A549 (cell line): ENCODE measurements at regions of chr4 and their contacts with region 1.

Region 1: GRCh38 chr4:150224896-150225591 is 146.8 kb downstream of the DCLK2 start:
- DNase-seq: peak; percentile 25 to 88
- ATAC-seq: peak; percentile 97
- H3K4me3 ChIP-seq: no peak overlapping the region
- H3K27ac ChIP-seq: peak overlapping the region; percentile 70 to 84
- H3K4me1 ChIP-seq: peaks cover 67% of the 10 kb centered on the region
- CTCF ChIP-seq: no peak
- EP300 ChIP-seq: peak in 1 of 2 experiments; percentile 54; a peak in 1 of 5 replicates
- POLR2A ChIP-seq: no peak
- RAD21 ChIP-seq: no peak

Region 2: DNA sequence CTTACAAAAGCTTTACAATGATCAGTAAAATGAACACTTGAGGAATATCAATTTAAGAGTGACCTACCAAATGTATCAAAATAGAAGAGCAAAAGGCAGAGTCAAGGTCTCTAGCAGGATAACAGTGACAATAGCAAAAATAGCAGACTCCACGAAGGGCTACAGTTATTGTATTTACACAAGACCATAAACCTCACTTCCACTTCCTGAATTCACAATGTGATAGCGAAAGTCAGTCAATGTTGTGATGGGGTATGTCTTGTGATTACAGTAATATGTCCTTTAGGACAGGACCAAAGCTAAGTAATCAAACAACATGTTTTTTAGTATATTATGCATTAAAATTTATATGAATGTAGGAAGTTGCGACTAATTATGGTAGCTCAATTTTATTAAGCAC is 549.0 kb before region 1 on chr4:
- CTCF ChIA-PET with region 1: no interaction called
- POLR2A ChIA-PET with region 1: no interaction called
- DNase-seq: no peak
- ATAC-seq: no peak
- H3K4me3 ChIP-seq: no peak overlapping the region
- H3K27ac ChIP-seq: no peak overlapping the region
- H3K4me1 ChIP-seq: no peaks in the 10 kb centered on the region
- CTCF ChIP-seq: no peak
- EP300 ChIP-seq: no peak
- POLR2A ChIP-seq: no peak
- RAD21 ChIP-seq: no peak

Region 3: GRCh38 chr4:149987330-149988086 is 237.5 kb before region 1 on chr4:
- CTCF ChIA-PET with region 1: no interaction called
- POLR2A ChIA-PET with region 1: no interaction called
- DNase-seq: no peak
- ATAC-seq: no peak
- H3K4me3 ChIP-seq: no peak overlapping the region
- H3K27ac ChIP-seq: no peak overlapping the region
- H3K4me1 ChIP-seq: peaks cover 14% of the 10 kb centered on the region
- CTCF ChIP-seq: no peak
- EP300 ChIP-seq: no peak
- POLR2A ChIP-seq: no peak
- RAD21 ChIP-seq: no peak

Region 4: DNA sequence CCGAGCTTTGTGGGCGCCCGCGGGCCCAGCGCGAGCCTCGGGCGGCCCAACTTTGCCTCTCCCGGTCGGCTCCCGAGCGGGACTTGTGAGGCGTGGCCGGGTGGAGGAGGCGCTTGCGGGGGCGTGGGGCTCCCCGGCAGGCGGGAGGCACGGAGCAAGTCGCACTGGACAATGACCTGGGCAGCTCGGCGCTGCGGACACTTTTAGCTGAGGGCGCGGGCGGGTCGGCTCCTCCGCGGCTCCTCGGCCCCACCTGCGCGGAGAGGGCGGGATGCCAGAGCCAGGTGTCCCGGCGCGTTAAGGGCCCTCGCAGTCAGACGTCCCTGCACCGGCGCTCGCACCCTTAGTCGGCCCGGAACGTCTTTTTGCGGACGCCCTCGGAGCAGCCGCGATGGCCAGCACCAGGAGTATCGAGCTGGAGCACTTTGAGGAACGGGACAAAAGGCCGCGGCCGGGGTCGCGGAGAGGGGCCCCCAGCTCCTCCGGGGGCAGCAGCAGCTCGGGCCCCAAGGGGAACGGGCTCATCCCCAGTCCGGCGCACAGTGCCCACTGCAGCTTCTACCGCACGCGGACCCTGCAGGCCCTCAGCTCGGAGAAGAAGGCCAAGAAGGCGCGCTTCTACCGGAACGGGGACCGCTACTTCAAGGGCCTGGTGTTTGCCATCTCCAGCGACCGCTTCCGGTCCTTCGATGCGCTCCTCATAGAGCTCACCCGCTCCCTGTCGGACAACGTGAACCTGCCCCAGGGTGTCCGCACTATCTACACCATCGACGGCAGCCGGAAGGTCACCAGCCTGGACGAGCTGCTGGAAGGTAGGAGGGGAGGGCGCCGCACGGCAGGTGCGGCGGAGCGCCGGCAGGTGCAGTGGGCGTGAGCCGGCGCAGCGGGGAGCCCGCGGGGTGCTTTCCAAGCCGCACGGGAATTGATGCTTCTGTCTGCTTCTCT is 146.1 kb before region 1 on chr4:
- CTCF ChIA-PET with region 1: no interaction called
- POLR2A ChIA-PET with region 1: interaction called, 10 read pairs
- DNase-seq: peak; percentile 55 to 69
- ATAC-seq: peak; percentile 82 to 83
- H3K4me3 ChIP-seq: peak overlapping the region; percentile 94
- H3K27ac ChIP-seq: peak overlapping the region; percentile 95 to 99
- H3K4me1 ChIP-seq: peaks cover 36% of the 10 kb centered on the region
- CTCF ChIP-seq: peak; percentile 10; the same call in 1 of the 3 replicates
- EP300 ChIP-seq: no peak
- POLR2A ChIP-seq: 0 out of 2 replicates have a peak, but pooled peaks have one; percentile 10
- RAD21 ChIP-seq: peak in 1 of 2 experiments; percentile 32; a peak in 2 of 5 replicates

Region 5: GRCh38 chr4:150355858-150356455 is 130.9 kb after region 1 on chr4:
- CTCF ChIA-PET with region 1: no interaction called
- POLR2A ChIA-PET with region 1: no interaction called
- DNase-seq: no peak
- ATAC-seq: no peak
- H3K4me3 ChIP-seq: no peak overlapping the region
- H3K27ac ChIP-seq: no peak overlapping the region
- H3K4me1 ChIP-seq: peaks cover 10% of the 10 kb centered on the region; the same call in 1 of the 3 replicates
- CTCF ChIP-seq: no peak
- EP300 ChIP-seq: no peak
- POLR2A ChIP-seq: no peak
- RAD21 ChIP-seq: no peak